CD4-positive, alpha-beta memory T cell (primary cell): ENCODE measurements at regions of chr10 and their contacts with region 1.

Region 1: DNA sequence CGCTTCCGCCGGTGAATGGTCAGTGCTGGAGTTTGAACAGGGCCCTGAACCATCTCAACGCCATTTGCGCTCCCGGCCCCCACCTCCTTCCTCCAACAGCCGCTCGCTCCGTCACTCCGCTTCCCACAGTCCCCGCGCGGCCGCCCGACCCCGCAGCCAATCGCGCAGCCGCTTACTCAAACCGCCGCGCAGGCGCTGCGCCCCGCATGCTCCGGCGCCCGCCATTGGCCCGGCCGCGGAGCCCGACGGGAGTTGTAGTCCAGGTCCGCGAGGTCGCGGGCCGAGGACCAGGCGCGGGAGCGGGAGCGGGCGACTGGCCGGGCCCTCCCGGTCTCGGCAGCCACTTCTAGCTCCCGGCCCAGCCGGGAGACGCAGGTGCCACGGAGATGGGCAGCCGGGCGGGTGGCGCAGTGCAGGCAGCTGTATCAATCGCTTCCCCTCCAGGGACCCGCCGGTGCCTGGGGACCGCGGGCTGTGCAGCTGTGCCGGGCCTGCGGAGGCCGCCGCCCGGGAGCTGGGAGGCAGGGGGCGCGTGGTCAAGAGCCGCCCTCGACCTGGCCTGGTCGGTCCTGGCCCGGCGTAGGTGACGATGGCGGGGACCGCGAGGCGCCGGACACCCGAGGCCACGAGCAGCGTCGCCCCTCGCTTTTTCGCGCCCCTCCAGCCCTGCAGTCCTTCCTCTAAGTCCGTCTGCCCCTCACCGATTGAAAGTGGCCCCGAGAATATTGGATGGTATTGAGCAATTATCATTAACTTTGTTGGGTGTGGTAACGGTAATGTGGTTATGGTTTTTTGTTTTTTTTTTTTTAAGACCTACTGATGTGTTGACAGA is at the start of gene WAPL:
- DNase-seq: peak; percentile 93 to 97 (median 94)
- H3K4me3 ChIP-seq: peak within 1 kb of the TSS; percentile 33 to 90
- H3K4me3 Mint-ChIP-seq: peak within 1 kb of the TSS; percentile 95 to 99 (median 98)
- H3K27ac ChIP-seq: peak within 1 kb of the TSS; percentile 86
- H3K27ac Mint-ChIP-seq: peak within 1 kb of the TSS; percentile 79 to 97 (median 96)
- H3K4me1 ChIP-seq: peaks cover 60% of the 10 kb centered on the region
- H3K4me1 Mint-ChIP-seq: peaks cover 41 to 72% (median 57%) of the 10 kb centered on the region in 4 donors
- H3K27me3 ChIP-seq: no peaks in the 10 kb centered on the region
- H3K27me3 Mint-ChIP-seq: no peaks in the 10 kb centered on the region
- total RNA-seq, gene WAPL: 54.0 to 55.2 TPM

Region 2: GRCh38 chr10:86411281-86411841 is 110.5 kb before region 1 on chr10:
- CTCF ChIA-PET with region 1: no interaction called
- POLR2A ChIA-PET with region 1: interaction called, 4 read pairs
- intact Hi-C with region 1: loop called (anchors 1 kb)
- DNase-seq: peak in 2 of 5 donors; percentile 26 to 45
- H3K4me3 ChIP-seq: no peak overlapping the region
- H3K4me3 Mint-ChIP-seq: peak overlapping the region; percentile 54 to 84 (median 78)
- H3K27ac ChIP-seq: peak overlapping the region; percentile 42
- H3K27ac Mint-ChIP-seq: peak overlapping the region; percentile 74 to 94 (median 89)
- H3K4me1 ChIP-seq: peaks cover 46% of the 10 kb centered on the region
- H3K4me1 Mint-ChIP-seq: peaks cover 34 to 59% (median 43%) of the 10 kb centered on the region in 4 donors
- H3K27me3 ChIP-seq: no peaks in the 10 kb centered on the region
- H3K27me3 Mint-ChIP-seq: no peaks in the 10 kb centered on the region

Region 3: DNA sequence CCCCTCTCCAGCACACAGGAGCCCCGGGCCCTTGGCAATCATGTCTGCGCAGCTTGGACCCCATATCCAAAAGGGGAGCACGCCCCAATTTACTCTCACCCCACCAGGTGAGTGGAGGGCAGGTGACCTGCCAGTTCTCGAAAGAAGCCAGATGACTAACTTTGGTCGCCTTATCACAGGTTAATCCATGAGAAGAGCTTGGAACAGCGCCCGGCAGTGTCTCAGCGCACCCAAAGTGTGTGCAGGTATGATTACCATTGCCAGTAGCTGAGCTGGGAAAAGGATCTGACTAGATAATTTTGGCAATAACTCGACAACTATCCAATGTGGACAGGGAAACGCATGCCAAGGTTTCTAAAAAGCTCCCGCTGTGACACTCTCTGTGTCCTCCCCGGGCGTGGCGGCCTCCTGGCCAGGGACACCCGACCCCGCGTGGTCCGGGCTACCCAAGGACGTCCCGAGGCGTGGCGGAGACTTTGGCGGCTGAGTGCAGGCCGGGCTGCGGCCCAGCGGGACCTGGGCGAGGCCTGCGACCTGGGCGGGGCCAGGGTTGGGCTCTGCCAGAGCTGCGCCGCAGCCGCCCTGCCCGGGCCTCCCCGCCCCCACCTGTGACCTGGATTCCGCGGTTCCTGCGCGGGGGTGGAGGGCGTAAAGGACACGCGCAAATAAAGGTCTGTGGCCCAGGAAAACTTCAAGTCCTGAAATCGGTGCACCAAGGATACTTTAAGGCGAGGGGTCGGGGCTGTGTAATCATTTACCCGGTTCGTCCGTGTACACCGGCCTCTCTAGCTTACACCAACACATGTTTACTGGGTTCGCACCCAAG is 13.4 kb after region 1 on chr10:
- CTCF ChIA-PET with region 1: interaction called, 4 read pairs
- POLR2A ChIA-PET with region 1: interaction called, 26 read pairs
- intact Hi-C with region 1: loop called (anchors 1 kb)
- DNase-seq: peak; percentile 12 to 40 (median 22)
- H3K4me3 ChIP-seq: no peak overlapping the region
- H3K4me3 Mint-ChIP-seq: peak overlapping the region; percentile 62 to 86 (median 81)
- H3K27ac ChIP-seq: peak overlapping the region; percentile 21
- H3K27ac Mint-ChIP-seq: peak overlapping the region; percentile 73 to 89 (median 81)
- H3K4me1 ChIP-seq: peaks cover 20% of the 10 kb centered on the region
- H3K4me1 Mint-ChIP-seq: peaks cover 19 to 33% (median 27%) of the 10 kb centered on the region in 4 donors
- H3K27me3 ChIP-seq: no peaks in the 10 kb centered on the region
- H3K27me3 Mint-ChIP-seq: no peaks in the 10 kb centered on the region

Region 4: GRCh38 chr10:86585037-86585725 is 63.3 kb after region 1 on chr10:
- CTCF ChIA-PET with region 1: interaction called, 4 read pairs
- POLR2A ChIA-PET with region 1: interaction called, 3 read pairs
- intact Hi-C with region 1: loop called (anchors 1 kb)
- DNase-seq: peak; percentile 53 to 74 (median 66)
- H3K4me3 ChIP-seq: no peak overlapping the region
- H3K4me3 Mint-ChIP-seq: no peak overlapping the region
- H3K27ac ChIP-seq: no peak overlapping the region
- H3K27ac Mint-ChIP-seq: peak overlapping the region in 1 of 7 donors; percentile 57
- H3K4me1 ChIP-seq: peaks cover 5% of the 10 kb centered on the region
- H3K4me1 Mint-ChIP-seq: peaks cover 0 to 3% (median under 1%) of the 10 kb centered on the region in 4 donors
- H3K27me3 ChIP-seq: no peaks in the 10 kb centered on the region
- H3K27me3 Mint-ChIP-seq: no peaks in the 10 kb centered on the region